Natural killer cell (primary cell): ENCODE measurements at regions of chr14 and their contacts with region 1.

Region 1: DNA sequence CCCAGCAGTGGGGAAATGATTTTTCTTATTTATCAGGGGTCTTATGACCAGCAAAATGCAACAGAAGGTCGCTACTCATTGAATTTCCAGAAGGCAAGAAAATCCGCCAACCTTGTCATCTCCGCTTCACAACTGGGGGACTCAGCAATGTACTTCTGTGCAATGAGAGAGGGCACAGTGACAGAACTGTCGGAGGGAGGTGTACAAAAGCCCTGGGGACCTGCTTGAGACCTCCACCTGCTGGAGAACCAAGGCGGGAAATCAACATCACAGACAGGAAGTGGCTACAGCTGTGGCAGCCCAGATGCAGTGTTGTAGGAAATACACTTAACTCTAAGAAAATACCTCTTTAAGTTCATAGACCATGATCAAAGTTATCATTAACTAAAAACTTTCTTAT is 250.9 kb upstream of the OR4E1 start:
- DNase-seq: peak; percentile 53 to 85
- ATAC-seq: peak; percentile 76 to 80 (median 76)
- H3K4me3 ChIP-seq: peak overlapping the region; percentile 10
- H3K4me3 Mint-ChIP-seq: peak overlapping the region; percentile 85
- H3K27ac ChIP-seq: peak overlapping the region; percentile 78
- H3K27ac Mint-ChIP-seq: peak overlapping the region; percentile 85 to 88
- H3K4me1 ChIP-seq: peaks cover 16% of the 10 kb centered on the region
- H3K4me1 Mint-ChIP-seq: peaks cover 61 to 64% of the 10 kb centered on the region in 2 donors
- H3K27me3 ChIP-seq: no peaks in the 10 kb centered on the region
- H3K27me3 Mint-ChIP-seq: no peaks in the 10 kb centered on the region
- CTCF ChIP-seq: peak; percentile 27

Region 2: GRCh38 chr14:21822109-21822508 is 102.4 kb before region 1 on chr14:
- intact Hi-C with region 1: no loop called
- DNase-seq: no peak
- ATAC-seq: no peak
- H3K4me3 ChIP-seq: no peak overlapping the region
- H3K4me3 Mint-ChIP-seq: no peak overlapping the region
- H3K27ac ChIP-seq: no peak overlapping the region
- H3K27ac Mint-ChIP-seq: no peak overlapping the region
- H3K4me1 ChIP-seq: no peaks in the 10 kb centered on the region
- H3K4me1 Mint-ChIP-seq: no peaks in the 10 kb centered on the region
- H3K27me3 ChIP-seq: peaks cover 7% of the 10 kb centered on the region
- H3K27me3 Mint-ChIP-seq: peaks cover 20 to 51% of the 10 kb centered on the region in 2 donors
- CTCF ChIP-seq: no peak

Region 3: GRCh38 chr14:21874167-21874566 is 50.3 kb before region 1 on chr14:
- intact Hi-C with region 1: loop called (anchors 2 kb)
- DNase-seq: peak in 1 of 2 donors; percentile 50
- ATAC-seq: peak; percentile 84 to 96 (median 94)
- H3K4me3 ChIP-seq: peak overlapping the region; percentile 21
- H3K4me3 Mint-ChIP-seq: peak overlapping the region; percentile 88
- H3K27ac ChIP-seq: peak overlapping the region; percentile 54
- H3K27ac Mint-ChIP-seq: peak overlapping the region; percentile 90 to 91
- H3K4me1 ChIP-seq: peaks cover 16% of the 10 kb centered on the region
- H3K4me1 Mint-ChIP-seq: peaks cover 61 to 63% of the 10 kb centered on the region in 2 donors
- H3K27me3 ChIP-seq: no peaks in the 10 kb centered on the region
- H3K27me3 Mint-ChIP-seq: no peaks in the 10 kb centered on the region
- CTCF ChIP-seq: no peak

Region 4: GRCh38 chr14:22047115-22047514 is 122.6 kb after region 1 on chr14:
- intact Hi-C with region 1: no loop called
- DNase-seq: peak in 1 of 2 donors; percentile 76
- ATAC-seq: peak; percentile 73 to 88 (median 78)
- H3K4me3 ChIP-seq: no peak overlapping the region
- H3K4me3 Mint-ChIP-seq: no peak overlapping the region
- H3K27ac ChIP-seq: no peak overlapping the region
- H3K27ac Mint-ChIP-seq: no peak overlapping the region
- H3K4me1 ChIP-seq: no peaks in the 10 kb centered on the region
- H3K4me1 Mint-ChIP-seq: peaks cover 11 to 12% of the 10 kb centered on the region in 2 donors
- H3K27me3 ChIP-seq: no peaks in the 10 kb centered on the region
- H3K27me3 Mint-ChIP-seq: peaks cover 12 to 32% of the 10 kb centered on the region in 2 donors
- CTCF ChIP-seq: peak; percentile 38